ENCODE measurements at regions of chr16 and their contacts with region 1.

Region 1: DNA sequence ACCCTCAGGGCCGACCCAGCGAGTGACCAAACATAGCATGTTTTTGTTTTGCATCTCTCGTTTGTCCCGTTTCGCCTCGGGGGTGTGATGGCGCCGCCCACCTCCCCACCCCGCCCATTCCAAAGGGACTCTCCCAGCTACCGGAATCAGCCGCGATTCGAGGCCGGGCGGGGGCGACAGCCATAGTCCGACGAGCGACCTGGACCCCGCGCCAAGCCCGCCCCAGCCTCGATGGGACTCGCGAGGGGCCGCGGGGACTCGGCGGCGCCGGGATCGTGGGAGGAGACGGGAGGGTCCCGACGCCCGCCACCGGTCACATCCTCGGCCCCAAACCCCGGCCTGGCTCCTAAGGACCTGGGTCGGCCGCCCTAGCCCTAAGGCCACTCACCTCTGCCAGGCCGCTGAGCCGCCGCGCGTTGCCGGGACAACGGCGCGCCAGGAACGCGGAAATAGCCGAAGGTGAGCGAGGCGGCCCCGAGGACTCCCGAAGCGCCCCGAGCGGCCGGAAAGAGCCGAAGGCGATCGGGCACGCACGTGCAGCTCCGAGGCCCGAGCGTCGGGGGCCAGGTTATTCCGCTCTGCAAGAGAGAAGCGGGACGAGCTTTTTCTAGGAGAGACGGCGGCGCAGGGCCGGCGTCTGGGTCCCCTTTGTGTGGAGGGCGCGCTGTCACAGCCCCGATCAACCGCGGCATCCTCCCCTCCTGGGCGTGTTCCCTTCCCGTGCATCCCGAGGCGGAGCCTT is 1.4 kb downstream of the IFT140 start:
- DNase-seq: peak; percentile 85 to 95 (median 91)
- ATAC-seq: peak; percentile 58
- H3K4me3 ChIP-seq: peak overlapping the region; percentile 60
- H3K4me3 Mint-ChIP-seq: peak overlapping the region; percentile 70 to 95 (median 84)
- H3K27ac ChIP-seq: peak overlapping the region; percentile 75
- H3K27ac Mint-ChIP-seq: peak overlapping the region; percentile 78 to 99 (median 97)
- H3K4me1 ChIP-seq: peaks cover 17 to 34% of the 10 kb centered on the region in 2 donors
- H3K4me1 Mint-ChIP-seq: peaks cover 13 to 30% (median 24%) of the 10 kb centered on the region in 7 donors
- H3K27me3 ChIP-seq: no peaks in the 10 kb centered on the region
- H3K27me3 Mint-ChIP-seq: peaks cover 0 to 4% (median 0%) of the 10 kb centered on the region in 5 donors

Region 2: GRCh38 chr16:1420111-1420540 is 190.3 kb before region 1 on chr16:
- CTCF ChIA-PET with region 1: no interaction called
- POLR2A ChIA-PET with region 1: interaction called, 10 read pairs
- intact Hi-C with region 1: loop called (anchors 1 kb)
- DNase-seq: peak in 1 of 9 donors; percentile 30
- ATAC-seq: no peak
- H3K4me3 ChIP-seq: peak overlapping the region; percentile 66
- H3K4me3 Mint-ChIP-seq: peak overlapping the region; percentile 90 to 94 (median 92)
- H3K27ac ChIP-seq: peak overlapping the region; percentile 95
- H3K27ac Mint-ChIP-seq: peak overlapping the region; percentile 25 to 98 (median 98)
- H3K4me1 ChIP-seq: peaks cover 6 to 11% of the 10 kb centered on the region in 2 donors
- H3K4me1 Mint-ChIP-seq: peaks cover 4 to 31% (median 20%) of the 10 kb centered on the region in 7 donors
- H3K27me3 ChIP-seq: no peaks in the 10 kb centered on the region
- H3K27me3 Mint-ChIP-seq: peaks cover 0 to 5% (median 0%) of the 10 kb centered on the region in 5 donors

Region 3: GRCh38 chr16:1518626-1519135 is 91.8 kb before region 1 on chr16:
- CTCF ChIA-PET with region 1: no interaction called
- POLR2A ChIA-PET with region 1: no interaction called
- intact Hi-C with region 1: no loop called
- DNase-seq: no peak
- ATAC-seq: no peak
- H3K4me3 ChIP-seq: no peak overlapping the region
- H3K4me3 Mint-ChIP-seq: no peak overlapping the region
- H3K27ac ChIP-seq: no peak overlapping the region
- H3K27ac Mint-ChIP-seq: no peak overlapping the region
- H3K4me1 ChIP-seq: no peaks in the 10 kb centered on the region
- H3K4me1 Mint-ChIP-seq: no peaks in the 10 kb centered on the region
- H3K27me3 ChIP-seq: no peaks in the 10 kb centered on the region
- H3K27me3 Mint-ChIP-seq: no peaks in the 10 kb centered on the region

Region 4: GRCh38 chr16:1533443-1533951 is 77.0 kb before region 1 on chr16 and contains the start of gene TMEM204:
- CTCF ChIA-PET with region 1: no interaction called
- POLR2A ChIA-PET with region 1: interaction called, 13 read pairs
- intact Hi-C with region 1: loop called (anchors 2 kb)
- DNase-seq: peak in 8 of 9 donors; percentile 39 to 69 (median 58)
- ATAC-seq: peak; percentile 56
- H3K4me3 ChIP-seq: peak within 1 kb of the TSS; percentile 85
- H3K4me3 Mint-ChIP-seq: peak within 1 kb of the TSS; percentile 92 to 100 (median 98)
- H3K27ac ChIP-seq: peak within 1 kb of the TSS; percentile 84
- H3K27ac Mint-ChIP-seq: peak within 1 kb of the TSS; percentile 76 to 97 (median 94)
- H3K4me1 ChIP-seq: peaks cover 32 to 38% of the 10 kb centered on the region in 2 donors
- H3K4me1 Mint-ChIP-seq: peaks cover 35 to 56% (median 46%) of the 10 kb centered on the region in 7 donors
- H3K27me3 ChIP-seq: no peaks in the 10 kb centered on the region
- H3K27me3 Mint-ChIP-seq: peaks cover 0 to 3% (median 0%) of the 10 kb centered on the region in 5 donors
- total RNA-seq, gene TMEM204: 26.3 to 162 (median 47.5) TPM

Region 5: DNA sequence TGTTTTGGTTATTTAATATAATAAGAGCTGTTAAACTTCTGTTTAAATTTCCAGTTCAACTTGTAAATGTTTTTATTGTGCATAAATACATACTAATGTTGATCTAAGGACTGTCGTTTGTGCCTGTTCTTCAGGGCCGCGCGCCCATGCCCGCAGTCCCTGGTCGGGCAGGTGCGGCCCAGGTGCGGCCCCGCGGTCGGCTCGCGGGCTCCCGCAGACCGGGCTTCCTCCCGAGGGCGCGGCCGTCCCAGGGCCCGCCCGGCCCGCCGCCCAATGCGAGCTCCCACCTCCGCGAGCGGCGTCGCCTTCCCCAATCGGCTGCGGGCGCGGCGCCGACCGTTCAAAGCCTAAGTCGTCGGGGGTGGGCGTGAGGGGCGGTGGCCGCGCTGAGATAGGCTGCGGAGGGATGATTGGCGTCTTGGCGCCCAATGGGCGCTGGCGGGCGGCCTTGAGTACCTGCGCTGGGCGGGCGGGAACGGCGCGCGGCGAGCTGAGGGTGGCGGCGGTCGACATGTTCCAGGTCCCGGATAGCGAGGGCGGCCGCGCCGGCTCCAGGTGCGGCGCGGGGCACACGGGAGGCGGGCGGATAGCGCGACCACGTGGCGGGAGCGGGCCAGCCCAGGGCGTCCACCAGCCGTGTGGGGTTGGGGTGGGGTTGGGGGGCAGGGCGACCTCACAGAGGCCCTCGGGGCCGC is 67.5 kb after region 1 on chr16 and contains the start of gene JPT2:
- CTCF ChIA-PET with region 1: no interaction called
- POLR2A ChIA-PET with region 1: interaction called, 4 read pairs
- intact Hi-C with region 1: loop called (anchors 1 kb)
- DNase-seq: peak; percentile 89 to 97 (median 94)
- ATAC-seq: peak; percentile 98
- H3K4me3 ChIP-seq: peak within 1 kb of the TSS; percentile 59
- H3K4me3 Mint-ChIP-seq: peak within 1 kb of the TSS; percentile 81 to 90 (median 88)
- H3K27ac ChIP-seq: peak within 1 kb of the TSS; percentile 78
- H3K27ac Mint-ChIP-seq: peak within 1 kb of the TSS; percentile 64 to 91 (median 78)
- H3K4me1 ChIP-seq: no peaks in the 10 kb centered on the region
- H3K4me1 Mint-ChIP-seq: peaks cover 24 to 42% (median 36%) of the 10 kb centered on the region in 7 donors
- H3K27me3 ChIP-seq: no peaks in the 10 kb centered on the region
- H3K27me3 Mint-ChIP-seq: no peaks in the 10 kb centered on the region
- total RNA-seq, gene JPT2: 12.6 to 67.2 (median 36.4) TPM

Region 6: DNA sequence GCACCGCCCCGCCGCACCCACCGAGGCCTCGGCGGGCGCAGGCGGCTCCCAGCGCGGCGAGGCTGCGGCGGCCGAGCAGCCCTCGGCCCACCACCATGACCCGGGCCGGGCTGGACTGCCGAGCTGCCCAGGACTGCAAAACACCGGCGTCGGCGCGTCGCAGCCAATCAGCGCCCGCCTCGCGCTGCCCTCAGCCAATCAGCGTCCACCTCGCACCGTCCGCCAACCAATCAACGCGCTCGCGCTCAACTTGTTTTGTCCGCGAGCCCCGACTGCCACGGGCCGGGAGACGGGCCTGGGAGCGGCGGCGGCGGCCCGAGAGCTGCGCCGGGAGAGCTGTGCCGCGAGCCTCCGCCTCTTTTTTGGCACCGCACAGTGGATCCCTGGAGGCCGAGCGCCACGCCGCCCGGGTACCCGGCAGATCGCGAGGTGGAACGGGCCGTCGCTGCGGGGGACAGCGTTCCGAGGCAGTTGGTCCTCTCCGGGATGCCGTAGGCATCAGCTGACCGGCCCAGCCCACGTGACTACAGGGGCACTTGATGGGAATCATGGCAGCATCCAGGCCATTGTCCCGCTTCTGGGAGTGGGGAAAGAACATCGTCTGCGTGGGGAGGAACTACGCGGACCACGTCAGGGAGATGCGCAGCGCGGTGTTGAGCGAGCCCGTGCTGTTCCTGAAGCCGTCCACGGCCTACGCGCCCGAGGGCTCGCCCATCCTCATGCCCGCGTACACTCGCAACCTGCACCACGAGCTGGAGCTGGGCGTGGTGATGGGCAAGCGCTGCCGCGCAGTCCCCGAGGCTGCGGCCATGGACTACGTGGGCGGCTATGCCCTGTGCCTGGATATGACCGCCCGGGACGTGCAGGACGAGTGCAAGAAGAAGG is 216.5 kb after region 1 on chr16 and contains the starts of genes FAHD1 and HAGH:
- CTCF ChIA-PET with region 1: no interaction called
- POLR2A ChIA-PET with region 1: no interaction called
- intact Hi-C with region 1: loop called in 1 of 2 experiments (anchors 1 kb)
- DNase-seq: peak; percentile 83 to 98 (median 92)
- ATAC-seq: peak; percentile 91
- H3K4me3 ChIP-seq: peak within 1 kb of the TSS; percentile 99
- H3K4me3 Mint-ChIP-seq: peak within 1 kb of the TSS; percentile 82 to 98 (median 93)
- H3K27ac ChIP-seq: peak within 1 kb of the TSS; percentile 78
- H3K27ac Mint-ChIP-seq: peak within 1 kb of the TSS; percentile 85 to 94 (median 91)
- H3K4me1 ChIP-seq: peaks cover 19 to 26% of the 10 kb centered on the region in 2 donors
- H3K4me1 Mint-ChIP-seq: peaks cover 21 to 62% (median 44%) of the 10 kb centered on the region in 7 donors
- H3K27me3 ChIP-seq: no peaks in the 10 kb centered on the region
- H3K27me3 Mint-ChIP-seq: no peaks in the 10 kb centered on the region
- total RNA-seq, gene FAHD1: 7.8 to 12.9 (median 9.7) TPM
- total RNA-seq, gene HAGH: 46.2 to 72.9 (median 48.9) TPM

Region 7: GRCh38 chr16:2267913-2268666 is 657.6 kb after region 1 on chr16 and contains the start of gene RNPS1:
- CTCF ChIA-PET with region 1: no interaction called
- POLR2A ChIA-PET with region 1: no interaction called
- intact Hi-C with region 1: loop called in 1 of 2 experiments (anchors 5 kb)
- DNase-seq: peak; percentile 93 to 98 (median 96)
- ATAC-seq: peak; percentile 92
- H3K4me3 ChIP-seq: peak within 1 kb of the TSS; percentile 99
- H3K4me3 Mint-ChIP-seq: peak within 1 kb of the TSS; percentile 93 to 98 (median 95)
- H3K27ac ChIP-seq: peak within 1 kb of the TSS; percentile 91
- H3K27ac Mint-ChIP-seq: peak within 1 kb of the TSS; percentile 95 to 99 (median 98)
- H3K4me1 ChIP-seq: peaks cover 13 to 15% of the 10 kb centered on the region in 2 donors
- H3K4me1 Mint-ChIP-seq: peaks cover 15 to 42% (median 35%) of the 10 kb centered on the region in 7 donors
- H3K27me3 ChIP-seq: no peaks in the 10 kb centered on the region
- H3K27me3 Mint-ChIP-seq: peaks cover 0 to 2% (median 0%) of the 10 kb centered on the region in 5 donors
- total RNA-seq, gene RNPS1: 136 to 250 (median 220) TPM